Esophagus muscularis mucosa (tissue), 4 donors: ENCODE measurements at regions of chr2 and their contacts with region 1.

Region 1: DNA sequence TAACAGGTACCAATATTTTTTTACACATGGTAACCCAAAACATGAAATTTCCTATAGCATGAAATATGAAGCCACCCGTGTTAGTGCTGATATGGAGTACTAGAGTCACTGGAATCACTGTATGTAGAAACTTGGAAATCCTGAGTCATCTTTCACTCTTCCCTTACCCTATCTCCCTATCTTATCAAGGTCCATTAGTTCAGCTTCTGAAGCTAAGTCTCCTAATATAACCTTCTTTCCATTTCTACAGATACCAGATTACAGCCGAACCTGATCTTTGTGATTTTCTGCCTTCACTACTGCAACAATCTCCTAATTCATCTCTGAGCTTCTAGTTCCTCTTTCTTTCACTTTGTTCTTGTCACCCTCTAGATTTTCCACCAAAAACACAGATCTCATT is 59.0 kb downstream of the SEPTIN10 start:
- DNase-seq: no peak
- H3K4me3 ChIP-seq: no peak overlapping the region
- H3K27ac ChIP-seq: no peak overlapping the region
- H3K4me1 ChIP-seq: peaks cover 0 to 9% (median 3%) of the 10 kb centered on the region in 4 donors
- H3K27me3 ChIP-seq: no peaks in the 10 kb centered on the region
- CTCF ChIP-seq: no peak
- EP300 ChIP-seq: no peak
- POLR2A ChIP-seq: no peak

Region 2: DNA sequence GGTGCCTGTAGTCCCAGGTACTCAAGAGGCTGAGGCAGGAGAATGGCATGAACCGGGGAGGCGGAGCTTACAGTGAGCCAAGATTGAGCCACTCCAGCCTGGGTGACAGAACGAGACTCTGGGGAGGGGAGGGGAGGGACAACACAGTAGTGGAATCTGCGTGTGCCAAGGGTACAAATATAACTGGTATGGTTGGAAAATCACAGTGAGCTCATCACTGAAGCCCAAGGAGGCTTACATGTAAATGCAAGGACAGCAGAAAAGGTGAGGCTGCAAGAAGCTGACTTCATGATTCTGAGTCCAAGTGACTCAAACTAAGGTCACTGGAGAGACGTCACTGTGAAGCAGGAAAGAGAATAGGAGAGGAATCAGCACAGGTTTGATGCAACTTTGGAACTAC is 49.8 kb after region 1 on chr2:
- intact Hi-C with region 1: loop called (anchors 5 kb)
- DNase-seq: no peak
- H3K4me3 ChIP-seq: no peak overlapping the region
- H3K27ac ChIP-seq: no peak overlapping the region
- H3K4me1 ChIP-seq: peaks cover 15 to 81% (median 64%) of the 10 kb centered on the region in 4 donors
- H3K27me3 ChIP-seq: no peaks in the 10 kb centered on the region
- CTCF ChIP-seq: no peak
- EP300 ChIP-seq: no peak
- POLR2A ChIP-seq: no peak

Region 3: DNA sequence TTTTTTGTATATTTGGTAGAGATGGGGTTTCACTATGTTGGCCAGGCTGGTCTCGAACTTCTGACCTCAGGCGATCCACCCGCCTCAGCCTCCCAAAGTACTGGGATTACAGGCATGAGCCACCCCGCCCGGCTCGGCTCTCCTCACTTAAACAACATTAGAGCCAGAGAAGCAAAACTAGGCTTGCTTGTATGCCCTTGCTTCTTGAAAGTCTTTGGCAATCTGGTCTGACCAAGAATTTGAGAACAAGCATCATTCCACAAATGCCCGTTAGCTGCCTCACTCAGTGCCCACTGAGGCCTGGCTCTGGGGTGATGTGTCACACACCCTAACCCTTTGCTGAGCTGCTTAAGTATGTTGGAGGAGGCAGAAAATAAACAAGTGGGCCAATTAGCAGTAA is 92.9 kb after region 1 on chr2:
- intact Hi-C with region 1: no loop called
- DNase-seq: no peak
- H3K4me3 ChIP-seq: no peak overlapping the region
- H3K27ac ChIP-seq: no peak overlapping the region
- H3K4me1 ChIP-seq: peaks cover 10 to 17% (median 15%) of the 10 kb centered on the region in 4 donors
- H3K27me3 ChIP-seq: no peaks in the 10 kb centered on the region
- CTCF ChIP-seq: no peak
- EP300 ChIP-seq: no peak
- POLR2A ChIP-seq: no peak